ENCODE measurements at regions of chr17 and their contacts with region 1.

Region 1: GRCh38 chr17:4986951-4987766 is at the start of gene CAMTA2:
- DNase-seq: peak; percentile 80 to 85
- H3K4me3 ChIP-seq: peak within 1 kb of the TSS; percentile 73 to 99 (median 77)
- H3K27ac ChIP-seq: peak within 1 kb of the TSS; percentile 94 to 95
- H3K4me1 ChIP-seq: peaks cover 4% of the 10 kb centered on the region in 2 donors
- H3K27me3 ChIP-seq: no peaks in the 10 kb centered on the region
- CTCF ChIP-seq: peak in 2 of 3 donors; percentile 63 to 72
- POLR2A ChIP-seq: peak; percentile 73
- total RNA-seq, gene CAMTA2: 11.0 to 17.7 (median 13.5) TPM

Region 2: GRCh38 chr17:3723556-3724369 is 1263.4 kb before region 1 on chr17 and contains the start of gene HASPIN:
- intact Hi-C with region 1: no loop called
- DNase-seq: peak; percentile 72 to 90
- H3K4me3 ChIP-seq: peak within 1 kb of the TSS; percentile 77 to 89 (median 78)
- H3K27ac ChIP-seq: peak within 1 kb of the TSS; percentile 85 to 88
- H3K4me1 ChIP-seq: peaks cover 0 to 7% of the 10 kb centered on the region in 2 donors
- H3K27me3 ChIP-seq: no peaks in the 10 kb centered on the region
- CTCF ChIP-seq: peak; percentile 16 to 30 (median 25)
- POLR2A ChIP-seq: peak; percentile 50
- total RNA-seq, gene HASPIN: 0.29 to 0.48 (median 0.33) TPM

Region 3: DNA sequence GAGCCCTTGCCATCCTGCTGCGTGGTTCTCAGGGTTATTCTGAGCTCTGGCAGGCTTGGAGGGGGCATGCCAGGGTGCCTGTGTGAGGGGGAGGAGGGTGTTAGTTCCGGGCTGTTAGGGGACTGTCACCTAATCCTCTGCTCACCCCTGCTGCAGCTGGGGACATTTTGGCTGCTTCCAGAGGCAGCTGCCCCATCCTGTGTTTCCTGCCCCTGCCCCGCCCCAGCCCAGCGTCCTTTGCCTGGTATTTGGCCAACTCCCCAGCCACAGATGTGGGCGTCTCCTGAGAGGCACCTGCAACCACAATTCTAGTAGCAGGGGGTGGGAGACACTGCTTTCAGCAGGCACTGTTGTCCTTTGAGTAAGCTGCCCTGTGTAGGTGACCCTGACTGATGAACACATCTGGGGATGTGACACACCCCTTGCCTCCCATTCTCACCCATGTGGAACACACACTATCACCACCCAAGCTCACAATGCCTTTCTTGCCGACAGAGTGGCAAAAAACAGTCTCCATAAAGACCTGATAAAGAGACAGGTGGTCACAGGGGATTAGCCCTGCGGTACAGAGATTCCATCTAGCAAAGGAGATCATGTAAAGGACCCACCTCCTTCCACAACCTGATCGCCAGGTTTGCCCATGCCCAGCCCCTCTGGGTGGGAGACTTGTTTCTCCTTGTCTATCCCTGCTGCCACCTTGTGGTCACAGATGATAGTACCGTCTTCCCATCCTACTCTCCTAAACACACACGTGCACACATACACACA is 83.9 kb before region 1 on chr17 and contains the start of gene CHRNE:
- intact Hi-C with region 1: loop called (anchors 10 kb)
- DNase-seq: peak; percentile 77 to 87
- H3K4me3 ChIP-seq: no peak within 1 kb of the TSS
- H3K27ac ChIP-seq: peak within 1 kb of the TSS; percentile 52 to 67
- H3K4me1 ChIP-seq: peaks cover 0 to 3% of the 10 kb centered on the region in 2 donors
- H3K27me3 ChIP-seq: no peaks in the 10 kb centered on the region
- CTCF ChIP-seq: peak; percentile 75 to 90 (median 78)
- POLR2A ChIP-seq: no peak
- total RNA-seq, gene CHRNE: 0.16 to 2.0 (median 0.73) TPM

Region 4: DNA sequence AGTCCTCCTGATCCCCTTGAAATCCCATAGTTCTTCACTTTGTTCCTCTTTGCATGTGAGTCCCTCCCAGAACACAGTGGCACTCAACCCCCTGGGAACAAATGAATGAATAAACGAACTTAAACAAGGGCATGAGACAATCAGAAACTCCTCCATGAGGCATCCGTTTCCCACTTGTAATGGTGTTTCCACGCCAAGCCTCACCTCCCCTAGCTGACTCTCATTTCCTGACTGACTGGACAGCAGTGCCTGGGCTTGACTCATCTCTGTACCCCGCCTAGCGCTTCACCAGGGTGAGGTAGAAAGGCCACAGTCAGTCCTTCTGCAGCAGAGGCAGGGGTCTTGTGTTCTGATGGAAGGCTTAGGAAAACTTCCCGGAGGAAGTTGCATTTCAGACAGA is 24.8 kb after region 1 on chr17:
- intact Hi-C with region 1: no loop called
- DNase-seq: no peak
- H3K4me3 ChIP-seq: no peak overlapping the region
- H3K27ac ChIP-seq: no peak overlapping the region
- H3K4me1 ChIP-seq: no peaks in the 10 kb centered on the region
- H3K27me3 ChIP-seq: no peaks in the 10 kb centered on the region
- CTCF ChIP-seq: no peak
- POLR2A ChIP-seq: no peak